Activated CD4-positive, alpha-beta T cell treated with anti-CD3 and anti-CD28 coated beads, Interleukin-2, amount 10 ng/mL, durations not matched to agents 7 days and 5 days (primary cell): ENCODE measurements at regions of chr1 and their contacts with region 1.

Region 1: GRCh38 chr1:156226116-156226538 is 13.3 kb downstream of the PMF1 start:
- DNase-seq: no peak
- H3K4me3 Mint-ChIP-seq: no peak overlapping the region
- H3K27ac Mint-ChIP-seq: peak overlapping the region; percentile 76
- H3K4me1 Mint-ChIP-seq: peaks cover 48% of the 10 kb centered on the region
- H3K27me3 Mint-ChIP-seq: no peaks in the 10 kb centered on the region

Region 2: DNA sequence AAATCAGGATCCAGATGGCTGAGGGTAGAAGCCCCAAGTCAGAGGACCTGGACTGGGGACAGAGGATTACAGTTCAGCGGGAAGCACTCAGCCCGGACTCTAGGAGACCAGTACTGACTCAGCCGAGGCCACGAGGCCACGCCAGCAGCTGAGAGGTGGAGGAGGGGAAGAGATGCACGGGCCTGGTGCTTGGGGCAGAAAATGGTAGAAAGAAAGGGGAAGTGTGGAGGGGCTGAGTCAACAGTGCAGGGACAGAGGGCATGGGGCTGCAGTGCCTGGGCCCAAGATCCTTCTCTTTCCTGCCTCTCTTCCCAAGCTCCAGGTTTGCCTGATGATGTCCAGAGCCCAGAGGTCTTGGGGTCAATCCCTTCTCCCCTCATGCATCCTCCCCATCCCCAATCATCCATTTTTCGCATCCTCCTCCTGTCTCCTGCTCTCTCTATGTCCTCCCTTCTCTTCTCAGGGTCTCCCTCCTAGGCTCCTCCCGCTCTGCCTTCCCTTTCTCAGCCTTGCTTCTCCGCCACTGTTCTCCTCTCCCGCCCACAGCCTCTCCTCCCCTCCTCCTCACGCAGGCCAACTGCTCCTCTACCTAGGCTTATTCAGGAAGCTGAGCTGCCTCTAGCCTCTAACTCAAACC is 255.5 kb before region 1 on chr1:
- CTCF ChIA-PET with region 1: no interaction called
- POLR2A ChIA-PET with region 1: no interaction called
- DNase-seq: no peak
- H3K4me3 Mint-ChIP-seq: peak overlapping the region; percentile 19
- H3K27ac Mint-ChIP-seq: peak overlapping the region; percentile 83
- H3K4me1 Mint-ChIP-seq: peaks cover 95% of the 10 kb centered on the region
- H3K27me3 Mint-ChIP-seq: no peaks in the 10 kb centered on the region

Region 3: GRCh38 chr1:156129706-156130581 is 96.2 kb before region 1 on chr1:
- CTCF ChIA-PET with region 1: interaction called, 13 read pairs
- POLR2A ChIA-PET with region 1: no interaction called
- DNase-seq: peak; percentile 82
- H3K4me3 Mint-ChIP-seq: no peak overlapping the region
- H3K27ac Mint-ChIP-seq: peak overlapping the region; percentile 46
- H3K4me1 Mint-ChIP-seq: peaks cover 52% of the 10 kb centered on the region
- H3K27me3 Mint-ChIP-seq: no peaks in the 10 kb centered on the region

Region 4: GRCh38 chr1:156146020-156146768 is 79.9 kb before region 1 on chr1:
- CTCF ChIA-PET with region 1: interaction called, 42 read pairs
- POLR2A ChIA-PET with region 1: no interaction called
- DNase-seq: peak; percentile 68
- H3K4me3 Mint-ChIP-seq: peak overlapping the region; percentile 11
- H3K27ac Mint-ChIP-seq: peak overlapping the region; percentile 88
- H3K4me1 Mint-ChIP-seq: peaks cover 42% of the 10 kb centered on the region
- H3K27me3 Mint-ChIP-seq: no peaks in the 10 kb centered on the region

Region 5: DNA sequence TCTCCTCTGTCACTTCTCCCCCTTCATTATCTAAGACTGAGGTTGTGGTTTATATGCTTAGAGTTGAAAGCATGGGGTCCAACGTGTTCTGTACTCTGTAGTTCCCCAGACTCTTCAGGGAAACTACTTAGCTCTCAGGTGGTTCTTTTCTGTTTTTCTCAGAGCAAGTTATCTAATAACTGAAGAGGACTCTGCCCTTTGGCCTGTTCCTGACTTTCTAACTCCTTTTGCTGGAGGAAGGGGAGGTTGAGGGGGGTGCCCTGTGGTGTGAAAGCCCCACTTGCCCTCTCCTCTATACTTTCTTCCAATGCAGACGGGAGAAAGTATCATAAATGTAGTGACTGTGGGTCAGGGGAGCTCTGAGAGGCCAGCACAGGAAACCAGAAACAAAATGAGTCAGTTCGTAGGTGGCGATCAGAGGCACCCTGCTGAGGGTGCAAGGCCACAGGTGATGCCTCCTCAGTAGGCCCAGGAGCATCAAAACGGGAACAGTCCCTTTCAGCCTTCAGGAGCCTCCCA is 27.2 kb before region 1 on chr1:
- CTCF ChIA-PET with region 1: interaction called, 11 read pairs
- POLR2A ChIA-PET with region 1: no interaction called
- DNase-seq: no peak
- H3K4me3 Mint-ChIP-seq: no peak overlapping the region
- H3K27ac Mint-ChIP-seq: peak overlapping the region; percentile 81
- H3K4me1 Mint-ChIP-seq: peaks cover 64% of the 10 kb centered on the region
- H3K27me3 Mint-ChIP-seq: no peaks in the 10 kb centered on the region

Region 6: DNA sequence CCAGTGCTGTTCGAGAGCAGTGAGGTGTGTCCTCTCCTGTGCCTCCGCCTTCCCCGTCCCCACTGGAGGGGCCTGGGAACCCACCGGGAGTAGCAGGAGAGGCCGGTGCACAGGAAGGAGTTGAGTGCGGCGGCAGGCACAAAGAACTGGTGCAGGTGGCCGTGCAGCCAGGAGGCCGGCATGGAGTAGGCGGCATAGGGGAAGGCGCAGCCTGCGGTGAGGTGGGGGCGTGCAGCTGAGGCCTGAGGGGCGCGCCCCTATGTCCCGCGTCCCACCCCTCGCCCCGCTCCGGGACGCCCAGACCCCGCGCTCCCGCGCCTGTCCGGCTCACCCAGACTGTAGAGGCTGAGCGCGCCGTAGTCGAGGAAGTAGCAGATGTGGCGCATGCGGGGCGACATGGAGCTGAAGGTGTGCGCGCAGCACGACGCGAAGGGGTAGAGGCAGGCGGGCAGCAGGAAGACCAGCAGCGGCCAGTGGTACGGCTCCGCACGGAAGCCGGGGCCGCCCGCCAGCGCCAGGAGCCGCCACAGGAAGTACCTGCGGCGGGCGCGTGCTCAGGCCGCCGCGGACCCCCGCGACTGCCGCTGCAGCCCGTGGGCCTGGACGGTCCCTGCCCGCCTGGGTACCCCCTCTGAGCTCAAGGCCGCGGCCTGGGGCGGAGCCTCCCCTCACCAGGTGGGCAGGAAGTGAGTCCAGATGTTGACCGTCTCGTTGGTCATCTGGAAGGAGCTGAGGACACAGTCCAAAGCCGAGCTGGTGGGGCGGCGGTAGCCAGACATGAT is 19.5 kb after region 1 on chr1:
- CTCF ChIA-PET with region 1: interaction called, 21 read pairs
- POLR2A ChIA-PET with region 1: no interaction called
- DNase-seq: peak; percentile 57
- H3K4me3 Mint-ChIP-seq: peak overlapping the region; percentile 67
- H3K27ac Mint-ChIP-seq: peak overlapping the region; percentile 83
- H3K4me1 Mint-ChIP-seq: peaks cover 18% of the 10 kb centered on the region
- H3K27me3 Mint-ChIP-seq: no peaks in the 10 kb centered on the region